IMR-90 (cell line): ENCODE measurements at regions of chr5 and their contacts with region 1.

Region 1: DNA sequence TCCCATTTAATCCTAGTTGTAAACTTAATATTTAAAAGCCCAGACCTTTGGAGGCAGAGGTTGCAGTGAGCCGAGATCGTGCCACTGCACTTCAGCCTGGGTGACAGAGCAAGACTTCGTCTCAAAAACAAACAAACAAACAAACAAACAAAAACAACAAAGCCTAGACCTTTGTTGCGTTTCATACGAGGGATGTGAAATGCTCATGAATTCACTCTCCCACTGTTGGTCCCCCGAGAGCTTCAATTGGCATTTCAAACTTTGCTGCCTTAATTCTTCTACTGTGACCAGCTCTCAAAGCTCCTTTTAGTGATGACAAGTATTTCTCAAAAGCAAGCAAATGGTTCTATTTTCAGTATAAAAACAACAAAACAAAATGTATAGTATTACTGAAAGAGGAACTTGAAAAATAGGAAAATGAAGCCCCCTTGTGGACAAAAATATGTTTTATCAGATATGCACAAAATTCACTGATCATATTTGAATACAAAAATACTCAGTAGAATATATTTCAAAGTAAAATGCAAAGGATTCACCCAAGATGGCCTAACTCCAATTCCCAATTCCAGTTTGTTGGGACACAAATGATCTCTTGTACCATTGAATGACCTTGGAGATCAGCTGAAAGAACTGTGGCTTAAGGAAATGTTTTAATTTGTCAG is 140.4 kb downstream of the ESM1 start:
- DNase-seq: peak; percentile 79
- ATAC-seq: peak; percentile 71
- H3K4me3 ChIP-seq: no peak overlapping the region
- H3K27ac ChIP-seq: peak overlapping the region; percentile 89
- H3K4me1 ChIP-seq: peaks cover 21% of the 10 kb centered on the region
- H3K27me3 ChIP-seq: no peaks in the 10 kb centered on the region
- CTCF ChIP-seq: peak; percentile 68
- POLR2A ChIP-seq: peak; percentile 25; the same call in 1 of the 2 replicates
- RAD21 ChIP-seq: peak; percentile 73

Region 2: DNA sequence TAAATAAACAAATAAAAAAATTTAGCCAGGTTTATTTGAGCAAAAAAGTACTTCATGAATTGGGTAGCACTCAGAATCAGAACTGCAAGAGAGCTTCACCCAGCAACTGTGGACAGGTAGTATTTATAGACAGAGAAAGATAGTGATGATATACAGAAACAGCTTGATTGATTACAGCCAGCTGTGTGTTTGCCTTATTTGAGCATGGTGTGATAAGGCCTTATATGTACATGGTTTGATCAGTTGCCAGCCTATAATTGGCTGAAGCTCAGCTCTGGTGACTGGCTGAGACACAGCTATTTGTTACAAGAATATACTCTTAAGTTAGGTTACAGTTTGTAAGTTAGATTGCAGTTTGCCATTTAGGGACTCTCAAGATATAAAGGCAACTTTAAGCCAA is 500.4 kb before region 1 on chr5:
- CTCF ChIA-PET with region 1: no interaction called
- POLR2A ChIA-PET with region 1: no interaction called
- dilution Hi-C with region 1: no loop called
- in situ Hi-C with region 1: no loop called
- intact Hi-C with region 1: no loop called
- DNase-seq: no peak
- ATAC-seq: no peak
- H3K4me3 ChIP-seq: no peak overlapping the region
- H3K27ac ChIP-seq: no peak overlapping the region
- H3K4me1 ChIP-seq: no peaks in the 10 kb centered on the region
- H3K27me3 ChIP-seq: peaks cover 4% of the 10 kb centered on the region; the same call in 1 of the 2 replicates
- CTCF ChIP-seq: no peak
- POLR2A ChIP-seq: no peak
- RAD21 ChIP-seq: no peak

Region 3: GRCh38 chr5:54524704-54525103 is 320.3 kb before region 1 on chr5:
- CTCF ChIA-PET with region 1: interaction called, 4 read pairs
- POLR2A ChIA-PET with region 1: interaction called, 4 read pairs
- dilution Hi-C with region 1: no loop called
- in situ Hi-C with region 1: loop called (anchors 5 kb)
- intact Hi-C with region 1: no loop called
- DNase-seq: no peak
- ATAC-seq: peak; percentile 15
- H3K4me3 ChIP-seq: peak overlapping the region; percentile 15; the same call in 1 of the 2 replicates
- H3K27ac ChIP-seq: peak overlapping the region; percentile 75
- H3K4me1 ChIP-seq: peaks cover 29% of the 10 kb centered on the region
- H3K27me3 ChIP-seq: no peaks in the 10 kb centered on the region
- CTCF ChIP-seq: no peak
- POLR2A ChIP-seq: no peak
- RAD21 ChIP-seq: no peak

Region 4: DNA sequence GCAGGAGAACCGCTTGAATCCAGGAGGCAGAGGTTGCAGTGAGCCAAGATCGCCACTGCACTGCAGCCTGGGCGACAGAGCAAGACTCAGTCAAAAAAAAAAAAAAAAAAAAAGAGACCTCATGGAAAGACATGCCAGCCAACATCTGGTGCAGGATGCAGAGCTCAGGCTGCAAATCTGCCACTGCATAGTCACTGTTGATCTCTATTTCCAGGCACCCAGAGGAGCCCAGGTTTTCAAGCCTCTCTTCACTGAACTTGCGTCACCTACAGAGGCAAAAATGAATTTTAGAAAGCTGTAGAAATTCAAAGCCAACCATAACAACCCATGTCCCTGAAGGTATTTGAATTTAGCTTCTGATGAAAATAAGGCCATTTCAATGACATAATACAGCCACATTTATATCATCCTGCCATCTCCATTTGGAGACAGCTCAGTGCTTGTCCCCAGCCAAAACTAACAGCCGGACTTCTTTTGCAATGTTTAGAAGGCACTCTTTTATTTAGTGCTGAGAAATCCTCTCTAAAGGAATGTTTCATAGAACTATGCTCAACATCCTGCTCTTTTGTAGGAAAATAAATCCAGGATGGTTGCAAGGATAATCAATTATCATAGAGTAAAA is 214.2 kb before region 1 on chr5:
- CTCF ChIA-PET with region 1: no interaction called
- POLR2A ChIA-PET with region 1: no interaction called
- dilution Hi-C with region 1: no loop called
- in situ Hi-C with region 1: no loop called
- intact Hi-C with region 1: loop called (anchors 1 kb)
- DNase-seq: peak; percentile 18
- ATAC-seq: peak; percentile 79
- H3K4me3 ChIP-seq: no peak overlapping the region
- H3K27ac ChIP-seq: peak overlapping the region; percentile 72; the same call in 1 of the 2 replicates
- H3K4me1 ChIP-seq: peaks cover 11% of the 10 kb centered on the region; the same call in 1 of the 2 replicates
- H3K27me3 ChIP-seq: no peaks in the 10 kb centered on the region
- CTCF ChIP-seq: no peak
- POLR2A ChIP-seq: no peak
- RAD21 ChIP-seq: no peak

Region 5: GRCh38 chr5:54663866-54664265 is 181.2 kb before region 1 on chr5:
- CTCF ChIA-PET with region 1: interaction called, 5 read pairs
- POLR2A ChIA-PET with region 1: no interaction called
- dilution Hi-C with region 1: no loop called
- in situ Hi-C with region 1: no loop called
- intact Hi-C with region 1: loop called (anchors 10 kb)
- DNase-seq: peak; percentile 96
- ATAC-seq: peak; percentile 87
- H3K4me3 ChIP-seq: no peak overlapping the region
- H3K27ac ChIP-seq: peak overlapping the region; percentile 93; the same call in 1 of the 2 replicates
- H3K4me1 ChIP-seq: peaks cover 23% of the 10 kb centered on the region
- H3K27me3 ChIP-seq: no peaks in the 10 kb centered on the region
- CTCF ChIP-seq: no peak
- POLR2A ChIP-seq: no peak
- RAD21 ChIP-seq: no peak

Region 6: DNA sequence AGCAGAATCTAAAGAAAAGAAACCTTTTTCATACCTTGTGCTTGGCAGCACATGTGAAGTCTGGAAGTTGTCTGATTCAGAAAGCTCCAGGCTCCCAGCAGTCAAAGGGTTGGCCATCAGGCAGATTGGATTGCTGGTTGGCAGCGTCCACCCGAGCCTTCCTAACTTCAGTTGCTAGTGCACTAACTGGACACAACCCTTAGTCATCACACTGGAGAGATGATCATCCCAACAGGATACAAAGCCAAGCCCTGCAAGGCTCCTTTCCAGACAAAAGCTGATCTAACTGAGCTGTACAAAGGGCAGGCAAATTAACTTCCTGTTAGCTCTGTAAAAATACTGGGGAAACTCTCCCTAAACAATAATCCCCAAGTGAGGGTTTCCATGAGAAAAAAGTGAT is 141.9 kb before region 1 on chr5:
- CTCF ChIA-PET with region 1: no interaction called
- POLR2A ChIA-PET with region 1: no interaction called
- dilution Hi-C with region 1: no loop called
- in situ Hi-C with region 1: no loop called
- intact Hi-C with region 1: loop called (anchors 5 kb)
- DNase-seq: peak; percentile 93
- ATAC-seq: peak; percentile 66
- H3K4me3 ChIP-seq: peak overlapping the region; percentile 11; the same call in 1 of the 2 replicates
- H3K27ac ChIP-seq: peak overlapping the region; percentile 87; the same call in 1 of the 2 replicates
- H3K4me1 ChIP-seq: peaks cover 27% of the 10 kb centered on the region
- H3K27me3 ChIP-seq: no peaks in the 10 kb centered on the region
- CTCF ChIP-seq: no peak
- POLR2A ChIP-seq: no peak
- RAD21 ChIP-seq: peak; percentile 30

Region 7: DNA sequence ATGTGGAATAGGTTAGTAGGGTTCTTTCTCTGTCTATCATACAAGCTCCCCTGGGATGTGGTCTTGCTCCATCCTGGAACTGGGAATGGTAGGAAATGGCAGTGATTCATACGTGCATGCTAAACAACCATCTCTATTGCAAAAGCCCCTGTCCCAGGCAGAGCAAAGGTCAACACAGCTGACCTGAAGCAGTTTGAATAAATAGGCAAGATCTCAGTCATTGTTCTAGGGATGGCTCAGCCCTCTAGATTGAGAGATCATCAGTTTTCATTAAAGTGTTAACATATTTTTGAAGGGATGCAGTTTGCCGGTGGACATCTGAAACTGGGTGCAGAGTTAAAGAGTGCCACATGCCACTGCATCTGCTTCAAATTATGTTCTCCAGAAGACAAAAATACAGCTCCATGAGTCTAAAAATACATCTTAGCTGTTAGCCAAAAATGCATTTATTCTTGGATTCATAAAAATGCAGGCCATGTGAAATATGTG is 83.8 kb before region 1 on chr5:
- CTCF ChIA-PET with region 1: no interaction called
- POLR2A ChIA-PET with region 1: no interaction called
- dilution Hi-C with region 1: no loop called
- in situ Hi-C with region 1: loop called (anchors 5 kb)
- intact Hi-C with region 1: loop called (anchors 2 kb)
- DNase-seq: peak; percentile 95
- ATAC-seq: peak; percentile 78
- H3K4me3 ChIP-seq: no peak overlapping the region
- H3K27ac ChIP-seq: peak overlapping the region; percentile 68; the same call in 1 of the 2 replicates
- H3K4me1 ChIP-seq: peaks cover 27% of the 10 kb centered on the region
- H3K27me3 ChIP-seq: no peaks in the 10 kb centered on the region
- CTCF ChIP-seq: no peak
- POLR2A ChIP-seq: no peak
- RAD21 ChIP-seq: no peak; the same call in 1 of the 2 replicates

Region 8: GRCh38 chr5:55172051-55172899 is 327.2 kb after region 1 on chr5:
- CTCF ChIA-PET with region 1: no interaction called
- POLR2A ChIA-PET with region 1: no interaction called
- dilution Hi-C with region 1: no loop called
- in situ Hi-C with region 1: no loop called
- intact Hi-C with region 1: no loop called
- DNase-seq: peak; percentile 78
- ATAC-seq: peak; percentile 45
- H3K4me3 ChIP-seq: peak overlapping the region; percentile 55
- H3K27ac ChIP-seq: no peak overlapping the region
- H3K4me1 ChIP-seq: peaks cover 7% of the 10 kb centered on the region
- H3K27me3 ChIP-seq: peaks cover 28% of the 10 kb centered on the region
- CTCF ChIP-seq: peak; percentile 88
- POLR2A ChIP-seq: no peak
- RAD21 ChIP-seq: peak; percentile 87

Region 9: GRCh38 chr5:56763711-56764466 is 1918.9 kb after region 1 on chr5:
- CTCF ChIA-PET with region 1: no interaction called
- POLR2A ChIA-PET with region 1: no interaction called
- dilution Hi-C with region 1: no loop called
- in situ Hi-C with region 1: no loop called
- intact Hi-C with region 1: no loop called
- DNase-seq: peak; percentile 65
- ATAC-seq: peak; percentile 97
- H3K4me3 ChIP-seq: no peak overlapping the region
- H3K27ac ChIP-seq: no peak overlapping the region
- H3K4me1 ChIP-seq: peaks cover 5% of the 10 kb centered on the region
- H3K27me3 ChIP-seq: no peaks in the 10 kb centered on the region
- CTCF ChIP-seq: no peak
- POLR2A ChIP-seq: no peak
- RAD21 ChIP-seq: no peak